HepG2 (cell line): ENCODE measurements at regions of chr16 and their contacts with region 1.

Region 1: GRCh38 chr16:88700636-88701482 is 5.3 kb downstream of the RNF166 start:
- DNase-seq: peak; percentile 91
- ATAC-seq: peak; percentile 81
- H3K4me3 ChIP-seq: peak overlapping the region; percentile 21 to 64 (median 47); a peak in 5 of 6 replicates
- H3K27ac ChIP-seq: peak overlapping the region; percentile 59
- H3K4me1 ChIP-seq: peaks cover 56% of the 10 kb centered on the region
- H3K27me3 ChIP-seq: no peaks in the 10 kb centered on the region
- CTCF ChIP-seq: peak; percentile 27; the same call in 1 of the 2 replicates
- EP300 ChIP-seq: peak; percentile 34 to 50; a peak in 2 of 4 replicates
- POLR2A ChIP-seq: no peak
- RAD21 ChIP-seq: peak; percentile 13

Region 2: DNA sequence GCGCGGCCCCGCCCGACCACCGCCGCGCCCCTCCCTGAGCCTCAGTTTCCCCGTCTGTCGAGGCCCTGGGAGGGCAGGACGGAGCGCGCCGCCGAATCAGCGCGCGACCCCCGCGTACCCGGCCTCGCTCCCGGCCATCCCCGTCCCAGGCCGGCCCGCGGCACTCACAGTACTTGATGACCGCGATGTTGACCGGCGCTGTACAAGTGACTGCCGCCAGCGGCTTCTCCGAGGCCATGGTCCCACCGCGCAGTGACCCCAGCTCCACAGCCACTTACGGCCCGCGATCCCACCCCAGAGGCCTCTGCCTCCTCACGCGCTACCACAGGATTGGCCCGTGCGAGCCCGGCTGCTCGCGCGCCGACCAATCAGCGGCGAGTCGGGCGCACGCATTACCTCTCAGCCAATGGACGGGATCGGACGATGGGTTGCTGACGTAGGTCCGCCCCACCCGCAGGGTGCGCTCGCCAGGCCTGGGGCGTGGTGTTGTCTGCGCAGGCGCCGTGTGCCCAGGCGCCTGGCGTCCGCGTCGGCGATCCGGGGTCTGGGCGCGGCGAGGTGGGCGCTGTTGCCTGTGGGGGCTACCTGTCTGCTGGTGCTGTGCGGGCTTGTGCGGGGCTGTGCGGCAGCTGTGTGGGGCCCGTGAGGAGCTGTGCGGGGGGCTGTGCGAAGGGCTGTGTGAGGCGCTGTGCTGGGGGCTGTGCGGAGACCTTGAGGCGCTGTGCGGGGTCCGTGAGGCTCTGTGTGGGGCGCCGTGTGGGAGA is 37.8 kb before region 1 on chr16 and contains the start of gene MVD:
- CTCF ChIA-PET with region 1: no interaction called
- POLR2A ChIA-PET with region 1: interaction called, 5 read pairs
- in situ Hi-C with region 1: no loop called
- intact Hi-C with region 1: loop called (anchors 2 kb)
- DNase-seq: peak; percentile 98
- ATAC-seq: peak; percentile 97
- H3K4me3 ChIP-seq: peak within 1 kb of the TSS; percentile 81 to 95 (median 91)
- H3K27ac ChIP-seq: peak within 1 kb of the TSS; percentile 78
- H3K4me1 ChIP-seq: peaks cover 44% of the 10 kb centered on the region
- H3K27me3 ChIP-seq: no peaks in the 10 kb centered on the region
- CTCF ChIP-seq: peak; percentile 58
- EP300 ChIP-seq: no peak; a peak in 1 of 4 replicates
- POLR2A ChIP-seq: peak; percentile 97 to 98
- RAD21 ChIP-seq: peak; percentile 56
- total RNA-seq, gene MVD: 128 and 187 TPM in 2 replicates

Region 3: GRCh38 chr16:88686439-88687253 is 14.2 kb before region 1 on chr16 and contains the start of gene SNAI3:
- CTCF ChIA-PET with region 1: no interaction called
- POLR2A ChIA-PET with region 1: interaction called, 11 read pairs
- in situ Hi-C with region 1: no loop called
- intact Hi-C with region 1: no loop called
- DNase-seq: peak; percentile 76
- ATAC-seq: peak; percentile 85
- H3K4me3 ChIP-seq: peak within 1 kb of the TSS; percentile 52 to 76 (median 69)
- H3K27ac ChIP-seq: no peak within 1 kb of the TSS
- H3K4me1 ChIP-seq: peaks cover 48% of the 10 kb centered on the region
- H3K27me3 ChIP-seq: peaks cover 23 to 82% of the 10 kb centered on the region in 2 experiments
- CTCF ChIP-seq: no peak; the same call in 1 of the 2 replicates
- EP300 ChIP-seq: no peak
- POLR2A ChIP-seq: peak in 1 of 2 experiments; percentile 15; a peak in 2 of 4 replicates
- RAD21 ChIP-seq: peak; percentile 17
- total RNA-seq, gene SNAI3: 0.09 and 0.18 TPM in 2 replicates

Region 4: DNA sequence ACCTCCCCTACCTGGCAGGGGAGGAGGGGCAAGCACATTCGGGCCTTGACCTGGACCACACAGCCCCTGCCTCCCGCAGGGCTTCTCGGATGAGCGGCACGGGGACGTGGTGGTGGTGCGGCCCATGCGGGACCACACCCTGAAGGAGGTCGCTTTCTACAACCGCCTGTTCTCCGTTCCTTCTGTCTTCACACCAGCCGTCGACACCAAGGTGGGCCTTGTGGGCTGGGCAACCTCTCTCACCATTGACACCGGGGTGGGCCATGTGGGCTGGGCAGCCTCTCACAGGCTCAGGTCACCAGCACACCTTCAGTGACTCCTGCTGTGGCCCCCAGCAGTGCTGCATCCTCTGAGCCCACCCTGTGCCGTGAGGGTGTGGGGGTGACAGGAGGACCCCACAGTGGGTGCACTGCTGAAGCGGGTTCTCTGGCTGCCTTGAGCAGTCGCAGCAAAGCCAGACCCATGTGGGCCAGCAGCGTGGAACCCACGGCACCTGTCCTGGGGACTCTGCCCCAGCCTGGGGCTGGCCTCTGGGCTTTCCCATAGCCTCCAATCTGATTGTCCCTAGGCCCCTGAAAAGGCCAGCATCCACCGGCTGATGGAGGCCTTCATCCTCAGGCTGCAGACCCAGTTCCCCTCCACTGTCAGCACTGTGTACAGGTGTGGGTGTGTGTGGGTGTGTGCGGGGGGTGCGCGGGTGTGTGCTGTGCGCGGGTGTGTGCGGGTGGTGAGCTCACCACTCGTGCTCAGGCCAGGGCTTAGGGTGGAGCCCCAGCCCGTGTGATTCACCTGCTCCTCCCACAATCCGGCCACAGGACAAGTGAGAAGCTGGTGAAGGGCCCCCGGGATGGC is 12.9 kb after region 1 on chr16:
- CTCF ChIA-PET with region 1: no interaction called
- POLR2A ChIA-PET with region 1: no interaction called
- in situ Hi-C with region 1: no loop called
- intact Hi-C with region 1: no loop called
- DNase-seq: no peak
- ATAC-seq: peak; percentile 9
- H3K4me3 ChIP-seq: no peak overlapping the region
- H3K27ac ChIP-seq: no peak overlapping the region
- H3K4me1 ChIP-seq: peaks cover 24% of the 10 kb centered on the region
- H3K27me3 ChIP-seq: no peaks in the 10 kb centered on the region
- CTCF ChIP-seq: no peak
- EP300 ChIP-seq: no peak
- POLR2A ChIP-seq: no peak; a peak in 1 of 4 replicates
- RAD21 ChIP-seq: no peak

Region 5: DNA sequence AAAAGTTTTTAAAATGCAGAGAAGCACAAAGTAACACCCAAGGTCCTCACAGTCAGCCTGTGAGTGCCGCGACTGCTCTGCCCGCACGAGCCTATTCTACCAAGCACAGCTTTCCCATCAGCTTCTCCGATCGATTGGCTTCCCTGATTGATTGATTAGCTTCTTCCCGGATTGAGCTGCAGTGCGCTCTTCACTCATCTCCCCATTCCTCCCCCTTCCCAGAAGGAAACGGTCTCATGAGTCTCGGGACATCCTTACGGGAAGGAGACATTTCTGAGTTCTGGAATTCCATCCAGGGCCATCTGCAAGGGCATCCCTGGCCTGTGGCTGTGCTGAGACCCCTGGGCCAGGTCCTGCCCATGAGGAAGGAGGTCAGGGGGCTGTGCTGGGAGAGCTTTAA is 66.1 kb after region 1 on chr16:
- CTCF ChIA-PET with region 1: no interaction called
- POLR2A ChIA-PET with region 1: no interaction called
- in situ Hi-C with region 1: no loop called
- intact Hi-C with region 1: no loop called
- DNase-seq: no peak
- ATAC-seq: no peak
- H3K4me3 ChIP-seq: no peak overlapping the region
- H3K27ac ChIP-seq: no peak overlapping the region
- H3K4me1 ChIP-seq: peaks cover 62% of the 10 kb centered on the region
- H3K27me3 ChIP-seq: no peaks in the 10 kb centered on the region
- CTCF ChIP-seq: no peak
- EP300 ChIP-seq: no peak
- POLR2A ChIP-seq: no peak
- RAD21 ChIP-seq: no peak

Region 6: DNA sequence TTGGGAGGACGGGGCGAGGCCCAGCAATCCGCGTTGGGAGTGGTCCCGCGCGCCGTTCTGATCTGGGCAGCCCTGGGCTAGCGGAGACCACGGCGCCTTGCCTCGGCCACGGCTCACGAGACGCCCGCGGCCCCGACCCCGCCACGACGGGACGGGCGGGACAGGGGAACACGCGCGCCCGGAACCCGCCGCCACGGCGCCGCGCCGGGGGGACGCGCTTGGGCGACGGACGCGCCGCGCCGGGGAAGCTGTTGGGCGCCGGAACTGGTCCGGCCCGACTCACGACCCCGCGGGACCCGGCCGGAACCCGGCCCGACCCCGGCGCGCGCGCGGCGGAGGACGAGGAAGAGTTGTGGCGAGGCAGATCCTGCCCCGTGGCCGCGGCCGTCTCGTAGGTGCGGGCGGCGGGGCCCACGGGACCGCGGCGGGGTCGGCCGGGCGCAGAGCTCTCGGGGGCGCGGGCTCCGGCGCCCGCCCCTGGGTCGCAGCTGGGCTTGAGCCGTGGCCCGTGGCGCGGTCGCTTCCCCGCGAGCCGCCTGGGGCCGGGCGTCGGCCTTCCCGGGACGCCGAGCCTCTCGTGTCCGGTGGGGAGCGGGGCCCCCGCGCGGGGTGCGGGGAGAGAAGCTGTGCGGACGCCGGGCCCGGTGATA is 392.9 kb after region 1 on chr16 and contains the start of gene ACSF3:
- CTCF ChIA-PET with region 1: no interaction called
- POLR2A ChIA-PET with region 1: no interaction called
- in situ Hi-C with region 1: no loop called
- intact Hi-C with region 1: no loop called
- DNase-seq: no peak
- ATAC-seq: peak; percentile 67
- H3K4me3 ChIP-seq: peak within 1 kb of the TSS; percentile 65 to 93 (median 87)
- H3K27ac ChIP-seq: peak within 1 kb of the TSS; percentile 41
- H3K4me1 ChIP-seq: peaks cover 80% of the 10 kb centered on the region
- H3K27me3 ChIP-seq: peaks cover 3 to 19% of the 10 kb centered on the region in 2 experiments; a peak in 3 of 5 replicates
- CTCF ChIP-seq: no peak
- EP300 ChIP-seq: peak; percentile 21 to 41; a peak in 1 of 4 replicates
- POLR2A ChIP-seq: peak; percentile 45; a peak in 2 of 4 replicates
- RAD21 ChIP-seq: peak; percentile 79
- total RNA-seq, gene ACSF3: 23.5 and 30.6 TPM in 2 replicates